Activated T-helper 2 cell treated with anti-CD3 and anti-CD28 coated beads, Interferon-gamma antibody, Interleukin-2, Interleukin-4, amounts not matched to agents 10 μg/mL and 5 μg/mL and 100 μg/mL, durations not matched to agents 14 hours and 24 hours and 36 hours (primary cell): ENCODE measurements at regions of chr3 and their contacts with region 1.

Region 1: DNA sequence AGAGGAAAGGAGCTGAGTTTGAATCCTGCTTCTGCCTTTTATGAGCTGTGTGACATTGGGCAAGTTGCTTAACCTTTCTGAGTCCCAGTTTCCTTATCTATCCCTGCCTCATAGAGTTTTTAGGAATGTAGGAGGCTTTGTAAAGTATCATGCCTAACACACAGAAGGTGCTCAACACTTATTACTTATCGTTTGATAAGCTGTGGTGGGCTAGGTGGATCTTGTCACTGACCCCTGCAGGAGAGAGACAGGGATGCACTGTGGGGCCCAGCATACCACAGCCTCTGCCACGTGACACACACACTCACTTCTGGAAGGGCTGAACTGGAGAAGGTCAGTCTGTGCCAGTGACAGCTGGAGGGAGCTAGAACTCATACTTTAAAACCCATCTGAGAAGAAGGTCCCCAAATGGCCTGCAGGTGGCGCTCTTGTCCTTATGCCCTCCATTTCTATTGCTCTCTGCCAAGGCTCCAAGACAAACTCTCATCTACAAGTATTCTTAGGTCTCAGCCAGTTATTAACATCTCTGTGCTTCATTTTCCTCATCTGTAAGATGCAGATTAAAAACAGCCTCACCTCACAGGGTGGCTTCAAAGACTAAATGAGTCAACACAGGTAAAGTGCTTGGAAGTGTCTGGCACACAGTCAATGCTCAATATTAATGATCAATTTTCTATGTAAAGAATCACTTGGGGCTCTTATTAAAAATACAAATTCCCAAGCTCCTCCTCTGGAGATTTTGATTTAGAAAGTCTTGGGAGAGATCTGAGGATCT is 57.5 kb upstream of the HACD2 start:
- DNase-seq: peak; percentile 49
- H3K4me3 Mint-ChIP-seq: no peak overlapping the region
- H3K27ac Mint-ChIP-seq: no peak overlapping the region
- H3K4me1 Mint-ChIP-seq: peaks cover 3% of the 10 kb centered on the region
- H3K27me3 Mint-ChIP-seq: no peaks in the 10 kb centered on the region

Region 2: GRCh38 chr3:123605789-123606234 is 36.6 kb before region 1 on chr3:
- intact Hi-C with region 1: no loop called
- DNase-seq: no peak
- H3K4me3 Mint-ChIP-seq: no peak overlapping the region
- H3K27ac Mint-ChIP-seq: no peak overlapping the region
- H3K4me1 Mint-ChIP-seq: peaks cover 9% of the 10 kb centered on the region
- H3K27me3 Mint-ChIP-seq: no peaks in the 10 kb centered on the region

Region 3: DNA sequence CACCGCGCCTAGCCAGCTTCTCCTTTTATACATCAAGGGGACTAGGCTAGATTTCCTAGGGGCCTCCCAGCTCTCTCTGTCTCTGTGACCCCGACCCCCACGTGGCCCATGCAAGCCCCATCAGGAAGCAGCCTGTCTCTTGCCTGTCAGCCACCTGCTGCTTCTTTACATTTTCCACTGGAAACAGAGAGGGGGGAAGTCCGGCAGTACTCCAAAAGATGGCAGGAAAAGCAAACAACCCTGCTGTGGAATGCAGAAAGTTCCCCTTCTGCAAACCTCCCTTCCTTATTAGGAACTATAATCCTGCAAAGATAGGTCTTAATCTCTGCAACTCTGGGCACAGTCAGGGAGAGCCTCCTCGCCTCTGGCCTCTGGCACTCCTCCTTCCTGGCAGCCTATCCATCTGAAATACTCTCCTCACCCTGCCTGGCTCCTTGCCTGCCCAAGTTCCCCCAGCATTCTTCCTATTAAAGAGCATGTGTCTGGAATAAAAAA is 10.2 kb before region 1 on chr3:
- intact Hi-C with region 1: no loop called
- DNase-seq: no peak
- H3K4me3 Mint-ChIP-seq: no peak overlapping the region
- H3K27ac Mint-ChIP-seq: no peak overlapping the region
- H3K4me1 Mint-ChIP-seq: no peaks in the 10 kb centered on the region
- H3K27me3 Mint-ChIP-seq: no peaks in the 10 kb centered on the region

Region 4: GRCh38 chr3:123688241-123688747 is 45.9 kb after region 1 on chr3:
- intact Hi-C with region 1: no loop called
- DNase-seq: no peak
- H3K4me3 Mint-ChIP-seq: no peak overlapping the region
- H3K27ac Mint-ChIP-seq: no peak overlapping the region
- H3K4me1 Mint-ChIP-seq: no peaks in the 10 kb centered on the region
- H3K27me3 Mint-ChIP-seq: no peaks in the 10 kb centered on the region

Region 5: GRCh38 chr3:123723522-123724168 is 81.3 kb after region 1 on chr3:
- intact Hi-C with region 1: loop called (anchors 1 kb)
- DNase-seq: peak; percentile 39
- H3K4me3 Mint-ChIP-seq: no peak overlapping the region
- H3K27ac Mint-ChIP-seq: no peak overlapping the region
- H3K4me1 Mint-ChIP-seq: no peaks in the 10 kb centered on the region
- H3K27me3 Mint-ChIP-seq: peaks cover 5% of the 10 kb centered on the region